WTC11 (cell line): ENCODE measurements at regions of chr11 and their contacts with region 1.

Region 1: GRCh38 chr11:95067039-95067840 is 521 bp downstream of the SRSF8 start:
- DNase-seq: peak; percentile 79
- ATAC-seq: peak; percentile 78
- H3K4me3 Mint-ChIP-seq: peak overlapping the region; percentile 86
- H3K27ac Mint-ChIP-seq: peak overlapping the region; percentile 80
- H3K4me1 Mint-ChIP-seq: peaks cover 17% of the 10 kb centered on the region
- H3K27me3 Mint-ChIP-seq: no peaks in the 10 kb centered on the region; the same call in 1 of the 2 replicates
- CTCF ChIP-seq: no peak

Region 2: DNA sequence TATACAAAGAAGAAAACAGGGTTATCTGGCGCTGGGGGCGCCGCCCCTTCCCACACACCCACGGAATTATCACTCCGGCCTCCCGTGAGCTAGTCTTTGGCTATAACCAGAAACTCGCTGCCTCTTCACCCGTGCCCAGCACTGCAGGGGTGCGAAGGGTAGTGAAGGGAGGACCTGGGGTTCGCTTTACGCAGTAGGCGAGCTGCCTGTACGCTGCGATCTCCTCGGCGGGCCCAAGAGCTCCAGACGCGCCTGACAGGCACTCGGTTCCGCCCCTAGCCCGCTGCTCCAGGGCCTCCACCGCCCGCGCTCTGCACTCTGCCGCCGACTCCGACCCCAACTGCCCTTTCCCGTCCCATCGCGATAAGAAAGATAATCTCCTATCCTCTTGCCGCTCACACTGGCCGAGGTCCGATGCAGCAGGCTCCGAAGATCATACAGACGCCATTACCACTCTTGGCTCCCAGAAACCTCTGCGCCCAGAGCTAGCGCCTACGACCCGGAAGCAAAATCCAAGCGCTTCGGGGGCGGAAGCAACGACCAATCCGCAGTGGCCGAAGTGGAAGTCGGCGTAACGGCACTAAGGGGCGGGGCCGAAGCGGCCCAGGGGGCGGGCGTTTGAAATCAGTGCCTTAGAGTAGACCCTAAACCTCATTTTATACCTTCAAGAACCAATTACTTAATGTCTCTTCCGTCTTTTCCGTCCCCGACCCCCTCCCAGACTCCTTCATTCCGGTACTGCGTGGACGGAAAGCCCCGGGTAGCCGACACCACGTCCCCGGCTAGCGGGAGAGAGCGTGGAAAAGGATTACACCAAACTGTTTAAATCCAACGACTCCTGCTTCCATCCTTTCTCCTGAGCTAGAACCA is 93.9 kb before region 1 on chr11 and contains the starts of genes CWC15 and KDM4D:
- CTCF ChIA-PET with region 1: interaction called, 5 read pairs
- POLR2A ChIA-PET with region 1: interaction called, 10 read pairs
- DNase-seq: peak; percentile 92
- ATAC-seq: peak; percentile 99
- H3K4me3 Mint-ChIP-seq: peak within 1 kb of the TSS; percentile 99
- H3K27ac Mint-ChIP-seq: peak within 1 kb of the TSS; percentile 98
- H3K4me1 Mint-ChIP-seq: peaks cover 10% of the 10 kb centered on the region
- H3K27me3 Mint-ChIP-seq: no peaks in the 10 kb centered on the region
- CTCF ChIP-seq: no peak
- total RNA-seq, gene CWC15: 49.4 to 55.5 TPM (median 52.1 TPM) in 3 replicates
- total RNA-seq, gene KDM4D: 1.9 to 2.4 TPM (median 2.1 TPM) in 3 replicates

Region 3: DNA sequence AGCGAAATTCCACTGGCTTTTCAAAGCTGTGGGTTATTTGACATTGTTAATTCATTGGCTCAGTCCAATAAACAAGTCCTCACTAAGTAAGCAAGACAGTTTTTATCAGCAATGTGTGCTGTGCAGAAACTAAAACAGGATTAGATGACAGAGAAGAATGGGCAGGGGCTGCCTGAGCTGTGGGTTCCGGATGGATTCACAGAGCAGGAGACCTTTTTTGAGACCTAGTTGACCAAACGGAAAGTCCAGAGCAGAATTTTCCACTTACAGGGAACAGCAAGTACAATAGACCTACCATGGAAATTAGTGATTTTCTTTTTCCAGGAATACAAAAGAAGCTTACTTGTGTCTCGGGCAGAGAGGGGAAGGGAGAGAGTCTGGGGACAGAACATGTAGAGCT is 23.2 kb before region 1 on chr11:
- CTCF ChIA-PET with region 1: no interaction called
- POLR2A ChIA-PET with region 1: no interaction called
- DNase-seq: no peak
- ATAC-seq: no peak
- H3K4me3 Mint-ChIP-seq: no peak overlapping the region
- H3K27ac Mint-ChIP-seq: no peak overlapping the region
- H3K4me1 Mint-ChIP-seq: no peaks in the 10 kb centered on the region
- H3K27me3 Mint-ChIP-seq: peaks cover 9% of the 10 kb centered on the region; the same call in 1 of the 2 replicates
- CTCF ChIP-seq: no peak

Region 4: DNA sequence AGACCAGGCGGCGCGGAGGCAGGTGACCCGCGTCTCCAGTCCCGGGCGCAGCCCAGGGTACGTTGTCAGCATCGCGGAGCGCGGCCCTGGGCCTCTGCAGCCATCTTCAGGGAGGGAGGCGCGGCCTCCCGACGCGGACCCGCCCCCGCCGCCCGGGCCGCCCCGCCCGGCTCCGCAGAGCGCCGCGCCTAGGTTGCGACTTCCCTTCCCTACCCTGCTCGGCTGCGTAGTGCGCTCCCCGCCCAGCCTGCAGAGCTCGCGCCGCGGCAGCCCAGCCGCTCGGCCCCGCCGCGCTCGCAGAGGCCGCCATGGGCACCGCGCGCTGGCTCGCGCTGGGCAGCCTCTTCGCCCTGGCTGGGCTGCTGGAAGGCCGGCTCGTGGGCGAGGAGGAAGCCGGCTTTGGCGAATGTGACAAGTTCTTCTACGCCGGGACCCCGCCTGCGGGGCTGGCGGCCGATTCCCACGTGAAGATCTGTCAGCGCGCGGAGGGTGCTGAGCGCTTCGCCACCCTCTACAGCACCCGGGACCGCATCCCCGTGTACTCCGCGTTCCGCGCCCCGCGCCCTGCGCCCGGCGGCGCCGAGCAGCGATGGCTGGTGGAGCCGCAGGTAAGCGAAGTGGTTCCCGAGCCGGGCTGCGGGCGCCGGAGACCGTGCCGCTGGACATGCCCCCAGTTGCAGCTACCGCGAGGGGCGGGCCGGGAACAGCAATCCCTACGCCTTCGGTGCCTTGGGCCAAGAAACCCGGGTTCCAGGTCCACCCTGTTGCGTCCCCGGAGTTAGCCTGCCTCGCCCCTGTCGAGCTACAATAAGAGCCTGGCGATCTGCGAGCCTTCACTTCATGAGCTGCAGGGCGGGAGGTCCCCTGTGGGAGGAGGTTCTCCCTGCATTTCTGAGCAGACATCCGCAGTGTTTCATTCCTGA is 22.6 kb after region 1 on chr11 and contains the start of gene ENDOD1:
- CTCF ChIA-PET with region 1: interaction called, 32 read pairs
- POLR2A ChIA-PET with region 1: interaction called, 19 read pairs
- DNase-seq: peak; percentile 82
- ATAC-seq: peak; percentile 93
- H3K4me3 Mint-ChIP-seq: peak within 1 kb of the TSS; percentile 81
- H3K27ac Mint-ChIP-seq: no peak within 1 kb of the TSS
- H3K4me1 Mint-ChIP-seq: peaks cover 37% of the 10 kb centered on the region
- H3K27me3 Mint-ChIP-seq: peaks cover 67% of the 10 kb centered on the region
- CTCF ChIP-seq: no peak
- total RNA-seq, gene ENDOD1: 2.6 to 3.3 TPM (median 3.2 TPM) in 3 replicates

Region 5: DNA sequence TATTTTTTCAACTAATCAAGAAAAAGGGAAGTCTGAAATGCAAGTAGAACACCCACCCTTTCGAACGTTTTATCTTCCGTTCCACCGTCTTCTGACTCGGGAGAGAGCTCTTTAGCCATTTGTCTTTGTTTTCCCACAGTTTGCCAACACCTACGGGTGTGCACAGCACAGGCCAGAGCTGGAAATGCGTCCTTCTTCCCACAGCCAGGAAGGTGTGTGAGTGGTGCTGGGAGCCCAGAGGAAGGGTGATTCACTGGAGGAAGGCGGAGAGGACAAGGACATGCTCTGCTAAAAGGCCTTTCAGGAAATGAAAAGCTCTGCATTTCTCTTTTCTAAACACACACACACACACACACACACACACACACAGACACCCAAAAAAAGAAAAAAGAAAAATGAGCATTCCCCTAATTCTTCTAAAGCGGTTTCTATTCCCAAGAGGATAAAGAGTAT is 40.9 kb after region 1 on chr11:
- CTCF ChIA-PET with region 1: interaction called, 11 read pairs
- POLR2A ChIA-PET with region 1: interaction called, 11 read pairs
- DNase-seq: no peak
- ATAC-seq: peak; percentile 41
- H3K4me3 Mint-ChIP-seq: peak overlapping the region; percentile 60
- H3K27ac Mint-ChIP-seq: peak overlapping the region; percentile 37; the same call in 1 of the 2 replicates
- H3K4me1 Mint-ChIP-seq: peaks cover 30% of the 10 kb centered on the region
- H3K27me3 Mint-ChIP-seq: no peaks in the 10 kb centered on the region; the same call in 1 of the 2 replicates
- CTCF ChIP-seq: no peak